Naive thymus-derived CD4-positive, alpha-beta T cell (primary cell): ENCODE measurements at regions of chr1 and their contacts with region 1.

Region 1: DNA sequence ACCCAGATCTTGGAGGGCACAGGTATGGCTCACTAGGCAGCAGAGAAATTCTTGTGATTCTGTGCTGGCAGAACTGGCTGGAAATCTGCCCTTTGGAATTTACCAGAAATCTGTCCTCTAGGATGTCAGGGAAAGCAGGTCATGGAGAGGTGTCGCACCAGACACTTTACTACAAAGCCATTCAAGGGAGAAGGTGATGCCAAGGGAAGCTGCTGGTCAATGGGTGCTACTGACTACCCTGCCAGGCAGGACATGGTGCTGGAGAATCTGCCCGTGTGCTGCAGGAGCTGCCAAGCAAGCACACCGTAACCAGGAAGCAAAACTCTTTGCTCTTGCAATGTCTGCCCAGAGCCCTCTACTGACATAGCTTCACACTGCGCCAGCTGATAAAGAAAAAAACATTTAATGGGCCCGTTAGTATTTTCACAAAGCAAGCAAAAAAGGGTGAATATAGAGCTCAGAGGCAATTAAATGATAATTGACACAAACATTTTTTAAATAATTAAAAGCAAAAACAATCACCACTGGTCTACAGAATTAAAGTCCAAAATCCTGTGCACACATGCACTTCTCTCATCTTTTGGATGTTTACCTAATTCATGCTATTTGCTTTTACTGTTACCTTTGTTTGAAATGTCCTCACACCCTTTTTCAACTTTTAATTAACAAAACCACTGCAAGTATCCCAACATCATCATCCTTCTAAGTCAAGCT is 7.2 kb upstream of the FBXO28 start:
- DNase-seq: peak in 2 of 9 donors; percentile 7 to 12
- ATAC-seq: peak; percentile 70
- H3K4me3 ChIP-seq: no peak overlapping the region
- H3K4me3 Mint-ChIP-seq: no peak overlapping the region
- H3K27ac ChIP-seq: no peak overlapping the region
- H3K27ac Mint-ChIP-seq: no peak overlapping the region
- H3K4me1 ChIP-seq: peaks cover 0 to 5% of the 10 kb centered on the region in 2 donors
- H3K4me1 Mint-ChIP-seq: peaks cover 0 to 4% (median 0%) of the 10 kb centered on the region in 7 donors
- H3K27me3 ChIP-seq: no peaks in the 10 kb centered on the region
- H3K27me3 Mint-ChIP-seq: peaks cover 4 to 65% (median 16%) of the 10 kb centered on the region in 5 donors

Region 2: DNA sequence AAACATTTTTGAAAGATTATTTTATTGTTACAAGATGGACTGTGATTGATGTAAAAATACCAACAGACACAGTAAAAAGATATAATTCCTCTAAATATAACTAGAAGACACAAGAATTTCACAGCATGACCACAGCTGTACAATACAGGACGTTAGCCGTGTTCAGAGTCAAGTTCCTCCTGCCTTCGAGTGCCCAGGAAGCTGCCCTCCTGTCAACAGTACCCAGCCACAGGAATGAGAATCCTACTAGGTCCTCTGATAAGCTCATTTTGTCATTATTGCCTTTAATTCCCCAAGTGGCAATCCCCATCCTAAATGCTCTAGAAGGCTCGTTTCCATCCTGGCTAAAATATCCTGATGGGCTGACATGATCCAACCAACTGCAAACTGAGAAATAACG is 410.8 kb before region 1 on chr1:
- CTCF ChIA-PET with region 1: no interaction called
- POLR2A ChIA-PET with region 1: interaction called, 3 read pairs
- intact Hi-C with region 1: loop called in 1 of 2 experiments (anchors 5 kb)
- DNase-seq: no peak
- ATAC-seq: no peak
- H3K4me3 ChIP-seq: no peak overlapping the region
- H3K4me3 Mint-ChIP-seq: no peak overlapping the region
- H3K27ac ChIP-seq: no peak overlapping the region
- H3K27ac Mint-ChIP-seq: no peak overlapping the region
- H3K4me1 ChIP-seq: no peaks in the 10 kb centered on the region
- H3K4me1 Mint-ChIP-seq: peaks cover 0 to 11% (median 6%) of the 10 kb centered on the region in 7 donors
- H3K27me3 ChIP-seq: no peaks in the 10 kb centered on the region
- H3K27me3 Mint-ChIP-seq: peaks cover 0 to 5% (median 0%) of the 10 kb centered on the region in 5 donors